Ascending aorta (tissue), 2 donors: ENCODE measurements at regions of chr6 and their contacts with region 1.

Region 1: GRCh38 chr6:149925974-149926777 is 3.3 kb upstream of the RAET1G start:
- DNase-seq: peak; percentile 72 to 95
- H3K4me3 ChIP-seq: peak overlapping the region; percentile 62 to 68
- H3K27ac ChIP-seq: peak overlapping the region in 1 of 2 donors; percentile 38
- H3K4me1 ChIP-seq: peaks cover 7 to 13% of the 10 kb centered on the region in 2 donors
- H3K27me3 ChIP-seq: no peaks in the 10 kb centered on the region
- CTCF ChIP-seq: peak; percentile 92 to 96 (median 93)

Region 2: GRCh38 chr6:149746147-149746946 is 179.8 kb before region 1 on chr6 and contains the start of gene NUP43:
- intact Hi-C with region 1: loop called (anchors 10 kb)
- DNase-seq: peak; percentile 64 to 96
- H3K4me3 ChIP-seq: peak within 1 kb of the TSS; percentile 70 to 73
- H3K27ac ChIP-seq: peak within 1 kb of the TSS; percentile 69 to 74
- H3K4me1 ChIP-seq: peaks cover 0 to 15% of the 10 kb centered on the region in 2 donors
- H3K27me3 ChIP-seq: no peaks in the 10 kb centered on the region
- CTCF ChIP-seq: peak; percentile 48 to 57 (median 49)
- total RNA-seq, gene NUP43: 2.9 TPM

Region 3: GRCh38 chr6:149834513-149835481 is 91.4 kb before region 1 on chr6:
- intact Hi-C with region 1: loop called (anchors 1 kb)
- DNase-seq: peak in 1 of 2 donors; percentile 76
- H3K4me3 ChIP-seq: no peak overlapping the region
- H3K27ac ChIP-seq: no peak overlapping the region
- H3K4me1 ChIP-seq: no peaks in the 10 kb centered on the region
- H3K27me3 ChIP-seq: no peaks in the 10 kb centered on the region
- CTCF ChIP-seq: peak; percentile 76 to 94 (median 90)

Region 4: GRCh38 chr6:149863697-149864577 is 62.2 kb before region 1 on chr6 and contains the start of gene LRP11:
- intact Hi-C with region 1: loop called (anchors 1 kb)
- DNase-seq: peak; percentile 47 to 91
- H3K4me3 ChIP-seq: peak within 1 kb of the TSS; percentile 68 to 74
- H3K27ac ChIP-seq: peak within 1 kb of the TSS; percentile 90 to 98
- H3K4me1 ChIP-seq: peaks cover 5 to 9% of the 10 kb centered on the region in 2 donors
- H3K27me3 ChIP-seq: no peaks in the 10 kb centered on the region
- CTCF ChIP-seq: no peak
- total RNA-seq, gene LRP11: 39.1 TPM

Region 5: GRCh38 chr6:149895833-149896271 is 30.3 kb before region 1 on chr6:
- intact Hi-C with region 1: loop called (anchors 1 kb)
- DNase-seq: peak in 1 of 2 donors; percentile 73
- H3K4me3 ChIP-seq: no peak overlapping the region
- H3K27ac ChIP-seq: peak overlapping the region; percentile 77 to 86
- H3K4me1 ChIP-seq: peaks cover 12 to 26% of the 10 kb centered on the region in 2 donors
- H3K27me3 ChIP-seq: no peaks in the 10 kb centered on the region
- CTCF ChIP-seq: no peak

Region 6: DNA sequence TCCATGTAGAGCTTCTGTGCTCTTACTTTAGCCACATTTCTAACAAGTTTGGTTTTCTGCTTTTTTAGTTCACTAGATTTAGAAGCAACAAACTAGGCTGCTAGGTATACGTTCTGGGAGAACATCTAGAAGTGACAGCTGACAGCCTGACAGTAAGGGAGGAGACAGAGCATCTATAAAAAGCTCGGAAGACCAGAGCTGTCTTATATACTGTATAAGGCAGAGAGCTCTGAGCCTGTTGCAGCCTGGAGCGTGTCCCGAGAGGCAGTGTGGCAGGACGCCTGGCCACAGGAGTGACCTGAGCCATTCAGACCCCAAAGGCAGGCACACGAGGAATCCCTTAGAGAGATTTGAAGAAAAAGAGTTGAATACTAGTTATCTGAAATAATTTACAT is 241.3 kb after region 1 on chr6:
- intact Hi-C with region 1: no loop called
- DNase-seq: no peak
- H3K4me3 ChIP-seq: no peak overlapping the region
- H3K27ac ChIP-seq: no peak overlapping the region
- H3K4me1 ChIP-seq: no peaks in the 10 kb centered on the region
- H3K27me3 ChIP-seq: no peaks in the 10 kb centered on the region
- CTCF ChIP-seq: no peak

Region 7: DNA sequence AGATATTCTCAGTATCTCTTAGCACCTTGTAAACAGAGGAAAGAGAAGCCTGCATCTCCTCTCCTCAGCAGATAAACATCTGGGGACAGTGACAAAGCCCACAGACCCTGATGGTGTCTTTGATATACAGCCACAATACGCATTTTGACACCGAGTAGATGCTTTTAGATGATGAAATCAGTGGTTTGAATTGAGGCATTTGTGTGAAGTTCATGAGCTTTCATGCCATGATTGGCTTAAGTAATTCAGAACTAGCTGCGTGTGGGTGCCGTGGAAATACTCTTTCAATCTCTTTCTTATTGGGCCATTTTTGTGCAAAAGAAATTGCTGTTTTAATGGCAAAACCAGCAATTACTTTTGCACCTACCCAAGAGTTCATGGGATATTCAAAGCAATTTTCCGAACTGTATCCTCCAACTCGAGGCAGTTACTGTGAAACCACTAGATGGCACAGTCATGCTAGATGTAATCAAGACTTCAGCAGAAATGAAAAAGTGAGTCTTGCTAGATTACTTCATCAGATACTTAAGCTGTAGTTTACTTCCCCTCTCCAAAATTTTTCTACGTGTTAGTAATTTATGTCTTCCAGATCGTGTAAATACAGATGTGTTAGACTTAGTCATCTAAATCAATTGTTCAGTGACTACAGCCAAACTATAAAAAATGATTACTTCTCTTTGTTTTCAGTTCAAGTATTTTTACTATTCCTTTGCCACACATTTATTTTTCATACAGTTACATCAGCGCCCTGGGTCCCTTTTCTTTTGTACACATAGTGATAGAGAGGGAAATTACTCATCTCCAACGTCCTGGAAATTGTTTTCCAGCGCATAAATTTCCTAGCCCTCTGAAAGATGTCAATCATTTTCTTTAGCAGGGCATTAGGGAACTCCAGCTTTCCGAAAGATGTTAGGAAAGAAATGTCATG is 492.0 kb after region 1 on chr6:
- intact Hi-C with region 1: no loop called
- DNase-seq: no peak
- H3K4me3 ChIP-seq: peak overlapping the region; percentile 53 to 66
- H3K27ac ChIP-seq: peak overlapping the region; percentile 35 to 37
- H3K4me1 ChIP-seq: no peaks in the 10 kb centered on the region
- H3K27me3 ChIP-seq: no peaks in the 10 kb centered on the region
- CTCF ChIP-seq: peak; percentile 73 to 79 (median 73)